ENCODE measurements at regions of chr1 and their contacts with region 1.

Region 1: GRCh38 chr1:243748706-243749283 is 101.2 kb downstream of the AKT3 start:
- DNase-seq: peak in 1 of 2 donors; percentile 34
- ATAC-seq: peak; percentile 64 to 94 (median 90)
- H3K4me3 ChIP-seq: no peak overlapping the region
- H3K27ac ChIP-seq: no peak overlapping the region
- H3K4me1 ChIP-seq: peaks cover 0 to 19% (median 5%) of the 10 kb centered on the region in 9 donors
- H3K27me3 ChIP-seq: no peaks in the 10 kb centered on the region
- CTCF ChIP-seq: peak; percentile 59 to 92 (median 83)

Region 2: DNA sequence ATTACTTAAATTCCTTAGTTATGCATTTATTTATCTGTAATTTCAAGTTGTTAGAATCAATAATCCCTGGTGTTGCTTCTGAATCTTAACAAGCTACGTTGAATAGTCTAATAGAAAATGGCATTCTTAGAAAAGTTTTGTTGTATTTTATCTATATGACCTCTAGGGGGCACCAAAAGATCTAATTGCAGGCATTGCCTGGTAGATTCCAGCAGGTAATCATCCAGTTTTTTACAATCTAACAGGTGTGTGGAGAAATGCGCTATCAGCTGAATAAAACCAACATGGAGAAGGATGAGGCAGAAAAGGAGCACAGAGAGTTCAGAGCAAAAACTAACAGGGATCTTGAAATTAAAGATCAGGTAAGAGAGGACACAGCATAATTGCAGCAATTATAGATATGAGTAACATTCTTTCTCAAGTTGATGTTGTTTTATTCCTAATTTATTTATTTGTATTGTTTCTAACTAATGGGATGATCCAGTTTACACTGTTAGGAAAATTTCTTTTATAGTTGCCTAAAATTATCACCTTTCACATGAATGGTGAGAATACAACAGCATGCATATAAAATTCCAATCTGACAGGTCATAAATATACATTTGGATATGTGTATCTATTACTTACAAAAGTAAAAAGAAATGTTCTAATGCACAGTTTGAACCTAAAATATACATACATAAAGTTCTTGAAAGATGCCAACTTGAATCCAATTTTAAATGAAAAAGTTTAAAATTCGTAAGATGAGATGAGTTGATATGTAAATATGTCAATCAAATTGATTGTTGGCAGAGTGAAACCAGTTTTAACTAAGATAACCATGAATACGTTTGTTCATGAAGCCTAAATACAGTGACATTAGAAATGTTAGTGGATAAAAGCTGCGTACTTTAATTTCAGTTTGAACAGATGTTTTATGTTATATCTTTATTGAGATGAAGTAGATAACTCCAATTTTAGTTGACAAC is 404.5 kb before region 1 on chr1:
- intact Hi-C with region 1: loop called in 7 of 10 experiments (anchors 5 to 10 kb)
- DNase-seq: no peak
- ATAC-seq: peak in 2 of 8 donors; percentile 34 to 53
- H3K4me3 ChIP-seq: no peak overlapping the region
- H3K27ac ChIP-seq: no peak overlapping the region
- H3K4me1 ChIP-seq: peaks cover 0 to 6% (median 0%) of the 10 kb centered on the region in 9 donors
- H3K27me3 ChIP-seq: no peaks in the 10 kb centered on the region
- CTCF ChIP-seq: peak; percentile 58 to 84 (median 74)

Region 3: DNA sequence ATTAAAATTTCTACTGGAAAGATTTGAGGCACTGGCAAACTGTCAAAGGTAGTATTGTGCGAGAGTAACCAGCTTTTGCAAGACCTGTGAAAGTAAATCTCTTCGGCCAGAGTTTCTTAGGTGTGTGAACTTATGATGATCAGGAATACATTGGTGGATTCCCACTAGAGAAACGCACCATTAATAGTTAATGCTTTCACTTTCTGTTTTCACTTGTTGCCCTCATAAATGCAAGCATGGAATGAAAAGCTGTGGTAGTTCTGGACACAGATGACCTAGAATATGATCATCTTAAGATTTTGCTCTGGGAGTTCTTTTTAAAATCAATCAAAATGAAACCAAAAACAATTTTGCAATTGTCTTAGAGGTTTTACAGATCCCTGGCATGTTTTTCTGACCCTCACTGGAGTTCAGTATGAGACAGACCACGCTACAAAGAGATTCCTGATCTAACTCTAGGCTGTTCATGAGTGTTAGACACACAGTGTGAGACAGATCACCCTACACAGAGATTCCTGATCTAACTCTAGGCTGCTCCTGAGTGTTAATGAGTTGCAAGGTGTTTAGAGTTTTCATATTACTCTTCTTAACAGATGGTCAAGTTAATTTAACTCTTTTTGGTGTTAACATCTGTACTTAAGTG is 394.2 kb before region 1 on chr1:
- intact Hi-C with region 1: loop called in 3 of 10 experiments (anchors 5 to 10 kb)
- DNase-seq: no peak
- ATAC-seq: peak in 5 of 8 donors; percentile 47 to 76 (median 62)
- H3K4me3 ChIP-seq: peak overlapping the region in 8 of 10 donors; percentile 17 to 46 (median 36)
- H3K27ac ChIP-seq: peak overlapping the region in 5 of 10 donors; percentile 7 to 59 (median 41)
- H3K4me1 ChIP-seq: peaks cover 0 to 16% (median 5%) of the 10 kb centered on the region in 9 donors
- H3K27me3 ChIP-seq: no peaks in the 10 kb centered on the region
- CTCF ChIP-seq: no peak

Region 4: DNA sequence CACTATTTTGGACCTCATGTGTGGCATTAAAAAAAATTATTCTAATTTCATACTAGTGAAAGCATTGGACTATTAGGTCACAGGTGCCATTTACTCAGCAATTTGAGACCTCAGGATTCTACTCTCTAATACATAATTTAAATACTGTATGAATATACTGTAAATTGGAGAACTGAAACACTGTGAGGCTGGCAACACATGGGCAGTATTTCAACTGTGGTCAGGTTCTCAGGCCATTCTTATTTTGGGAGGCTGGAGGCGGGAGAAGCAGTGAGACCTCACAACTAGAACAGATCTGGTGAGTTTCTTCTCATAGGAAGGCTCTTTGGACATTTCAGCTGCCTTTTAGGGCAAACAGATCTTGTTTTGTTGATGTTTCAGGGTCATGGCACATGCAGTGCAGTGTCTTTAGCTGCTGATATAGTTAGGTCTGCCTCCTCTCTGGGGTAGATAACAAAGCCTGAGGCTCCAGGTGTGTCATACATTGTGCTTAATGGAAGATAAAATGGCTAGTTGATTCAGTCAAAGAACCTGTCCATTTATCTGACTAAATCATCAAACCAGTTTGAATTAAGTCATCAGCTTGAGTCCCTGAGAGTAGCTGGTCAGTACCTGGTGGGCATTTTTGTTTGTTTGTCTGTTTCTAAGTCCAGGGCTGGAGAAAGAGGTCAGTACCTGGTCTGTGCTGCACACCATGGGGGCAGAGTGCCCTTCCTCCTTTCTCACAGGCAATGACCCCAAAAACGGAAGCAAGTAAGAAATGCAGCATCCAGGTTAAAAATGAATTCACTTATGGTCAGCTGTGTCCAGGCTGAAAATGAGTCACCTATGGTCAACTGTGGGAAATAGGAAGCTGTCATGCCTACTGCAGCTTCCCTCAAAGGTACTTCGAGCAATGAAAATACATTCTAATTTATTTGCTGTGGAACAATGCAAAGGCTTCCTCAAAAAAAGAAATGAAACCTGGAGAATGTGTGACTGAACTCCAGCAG is 276.7 kb before region 1 on chr1:
- intact Hi-C with region 1: loop called in 1 of 10 experiments (anchors 10 kb)
- DNase-seq: no peak
- ATAC-seq: peak in 5 of 8 donors; percentile 22 to 41 (median 34)
- H3K4me3 ChIP-seq: peak overlapping the region in 1 of 10 donors; percentile 45
- H3K27ac ChIP-seq: no peak overlapping the region
- H3K4me1 ChIP-seq: peaks cover 0 to 24% (median 12%) of the 10 kb centered on the region in 9 donors
- H3K27me3 ChIP-seq: no peaks in the 10 kb centered on the region
- CTCF ChIP-seq: no peak

Region 5: DNA sequence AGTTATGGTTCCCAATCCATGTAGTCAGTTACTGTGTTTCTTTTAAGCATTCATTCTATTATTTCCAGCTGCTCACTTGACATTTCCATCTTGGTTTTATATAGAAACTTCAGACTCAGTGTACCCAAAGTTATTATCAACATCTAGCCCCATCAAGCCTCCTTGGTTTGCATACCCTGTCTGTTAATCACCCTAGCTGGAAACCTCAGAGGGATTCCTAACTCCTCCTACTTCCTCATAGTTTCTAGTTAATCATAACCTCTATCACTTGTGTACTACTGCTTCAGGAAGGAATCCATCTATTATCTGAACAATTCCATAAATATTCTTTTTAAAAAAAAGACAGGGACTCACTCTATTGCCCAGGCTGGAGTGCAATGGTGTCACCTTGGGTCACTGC is 199.7 kb before region 1 on chr1:
- intact Hi-C with region 1: no loop called
- DNase-seq: no peak
- ATAC-seq: no peak
- H3K4me3 ChIP-seq: no peak overlapping the region
- H3K27ac ChIP-seq: no peak overlapping the region
- H3K4me1 ChIP-seq: no peaks in the 10 kb centered on the region
- H3K27me3 ChIP-seq: no peaks in the 10 kb centered on the region
- CTCF ChIP-seq: no peak

Region 6: DNA sequence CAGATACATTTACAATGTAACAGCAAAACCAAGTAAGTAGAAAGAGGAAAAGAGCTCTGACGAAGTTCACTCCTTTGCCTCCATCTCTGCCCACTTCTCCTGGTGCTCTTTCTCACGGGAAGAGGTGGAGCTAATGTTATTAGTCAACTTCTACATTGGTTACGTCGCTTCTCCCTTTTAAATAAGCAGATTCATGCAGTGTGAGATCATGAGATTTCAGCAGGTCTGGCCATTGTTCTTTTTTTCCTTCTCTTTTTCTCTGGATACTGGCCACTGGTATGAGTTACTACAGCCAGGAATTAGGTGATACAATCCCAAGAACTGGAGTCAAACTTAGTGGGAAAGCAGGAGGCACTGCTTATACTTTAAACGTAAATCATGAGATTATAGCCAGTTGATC is 105.9 kb before region 1 on chr1:
- intact Hi-C with region 1: no loop called
- DNase-seq: no peak
- ATAC-seq: no peak
- H3K4me3 ChIP-seq: no peak overlapping the region
- H3K27ac ChIP-seq: no peak overlapping the region
- H3K4me1 ChIP-seq: no peaks in the 10 kb centered on the region
- H3K27me3 ChIP-seq: no peaks in the 10 kb centered on the region
- CTCF ChIP-seq: no peak

Region 7: DNA sequence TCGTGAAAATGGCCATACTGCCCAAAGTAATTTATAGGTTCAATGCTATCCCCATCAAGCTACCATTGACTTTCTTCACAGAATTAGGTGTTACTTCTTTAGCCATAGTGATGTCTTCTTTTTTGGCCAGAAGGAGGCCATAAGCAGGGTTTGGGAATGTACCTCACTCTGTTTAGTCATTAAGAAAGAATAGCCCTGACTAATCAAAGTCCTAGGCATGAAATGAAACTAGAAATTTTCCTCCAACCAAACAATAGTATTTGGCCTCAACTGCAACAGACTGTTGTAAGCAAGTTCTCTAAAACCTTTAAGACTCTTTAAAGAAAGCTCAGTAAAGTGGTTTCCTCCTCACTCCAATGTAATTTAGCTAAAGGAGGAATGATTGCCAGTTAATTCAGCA is 62.6 kb before region 1 on chr1:
- intact Hi-C with region 1: no loop called
- DNase-seq: no peak
- ATAC-seq: no peak
- H3K4me3 ChIP-seq: no peak overlapping the region
- H3K27ac ChIP-seq: no peak overlapping the region
- H3K4me1 ChIP-seq: no peaks in the 10 kb centered on the region
- H3K27me3 ChIP-seq: no peaks in the 10 kb centered on the region
- CTCF ChIP-seq: no peak

Region 8: GRCh38 chr1:243713470-243714186 is 35.2 kb before region 1 on chr1:
- intact Hi-C with region 1: loop called in 2 of 10 experiments (anchors 2 to 5 kb)
- DNase-seq: peak in 1 of 2 donors; percentile 17
- ATAC-seq: peak in 7 of 8 donors; percentile 31 to 89 (median 83)
- H3K4me3 ChIP-seq: peak overlapping the region in 3 of 10 donors; percentile 5 to 25 (median 11)
- H3K27ac ChIP-seq: peak overlapping the region in 3 of 10 donors; percentile 3 to 22 (median 10)
- H3K4me1 ChIP-seq: peaks cover 0 to 38% (median 11%) of the 10 kb centered on the region in 9 donors
- H3K27me3 ChIP-seq: no peaks in the 10 kb centered on the region
- CTCF ChIP-seq: no peak

Region 9: GRCh38 chr1:243850202-243850451 is 101.3 kb after region 1 on chr1 and contains the start of gene AKT3:
- intact Hi-C with region 1: no loop called
- DNase-seq: peak; percentile 80 to 82
- ATAC-seq: peak; percentile 77 to 90 (median 84)
- H3K4me3 ChIP-seq: peak within 1 kb of the TSS; percentile 76 to 90 (median 81)
- H3K27ac ChIP-seq: peak within 1 kb of the TSS; percentile 92 to 99 (median 96)
- H3K4me1 ChIP-seq: peaks cover 0 to 24% (median 14%) of the 10 kb centered on the region in 9 donors
- H3K27me3 ChIP-seq: peaks cover 0 to 42% (median 15%) of the 10 kb centered on the region in 7 donors
- CTCF ChIP-seq: no peak
- total RNA-seq, gene AKT3: 11.8 to 27.6 (median 18.8) TPM

Measured in heart right ventricle (tissue), 16 donors.